Activated naive CD4-positive, alpha-beta T cell treated with anti-CD3 and anti-CD28 coated beads for 36 hours (primary cell): ENCODE measurements at regions of chr19 and their contacts with region 1.

Region 1: GRCh38 chr19:10864538-10864899 is 6.8 kb upstream of the CARM1 start:
- DNase-seq: peak; percentile 94
- H3K4me3 Mint-ChIP-seq: no peak overlapping the region
- H3K27ac Mint-ChIP-seq: no peak overlapping the region
- H3K4me1 Mint-ChIP-seq: peaks cover 15% of the 10 kb centered on the region
- H3K27me3 Mint-ChIP-seq: no peaks in the 10 kb centered on the region

Region 2: DNA sequence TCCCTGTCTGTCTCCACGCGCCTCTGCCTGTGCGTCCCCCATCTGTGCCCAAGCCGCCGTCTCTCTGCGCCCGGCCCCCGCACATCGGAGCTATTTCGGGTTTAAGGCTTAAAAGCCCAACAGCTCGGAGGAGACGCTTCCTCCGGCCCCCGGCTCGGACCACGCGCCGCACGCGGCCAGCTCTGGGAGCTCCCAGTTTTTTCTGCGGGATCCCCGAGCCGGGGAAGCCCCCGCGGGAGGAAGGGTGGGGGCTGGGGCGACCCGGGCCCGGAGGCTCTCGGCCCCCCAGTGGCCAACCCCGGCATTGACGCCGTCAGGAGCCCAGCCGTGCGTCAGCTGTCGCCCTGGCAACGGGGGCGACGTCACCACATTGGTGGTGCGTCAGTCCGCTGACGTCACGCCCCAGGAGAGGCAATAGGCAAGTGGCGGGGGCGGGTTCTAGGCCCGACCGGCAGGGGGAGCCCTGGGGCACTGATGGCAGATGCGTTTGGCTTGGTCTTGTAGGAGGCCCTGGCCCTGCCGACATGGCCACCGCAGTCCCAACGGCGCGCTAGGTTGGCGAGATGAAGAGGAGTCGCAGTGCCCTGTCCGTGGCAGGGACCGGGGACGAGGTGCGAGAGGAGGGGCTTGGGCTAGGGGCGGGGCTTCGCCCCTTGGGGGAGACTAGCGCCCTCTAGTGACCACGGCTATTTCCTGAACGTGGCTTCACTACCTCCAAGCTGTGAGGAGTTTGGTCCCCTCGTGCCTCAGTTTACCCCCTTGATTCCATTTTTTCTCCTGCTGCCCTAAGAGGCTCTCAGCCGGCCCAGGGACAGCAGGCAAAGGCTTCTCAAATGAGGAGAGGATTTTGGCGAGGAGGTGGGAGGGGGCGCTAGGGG is 447.9 kb before region 1 on chr19:
- CTCF ChIA-PET with region 1: no interaction called
- intact Hi-C with region 1: no loop called
- DNase-seq: peak; percentile 94
- H3K4me3 Mint-ChIP-seq: peak overlapping the region; percentile 75
- H3K27ac Mint-ChIP-seq: peak overlapping the region; percentile 82
- H3K4me1 Mint-ChIP-seq: peaks cover 53% of the 10 kb centered on the region
- H3K27me3 Mint-ChIP-seq: peaks cover 40% of the 10 kb centered on the region

Region 3: GRCh38 chr19:10602330-10603083 is 262.0 kb before region 1 on chr19:
- CTCF ChIA-PET with region 1: no interaction called
- intact Hi-C with region 1: no loop called
- DNase-seq: peak; percentile 91
- H3K4me3 Mint-ChIP-seq: peak overlapping the region; percentile 98
- H3K27ac Mint-ChIP-seq: peak overlapping the region; percentile 100
- H3K4me1 Mint-ChIP-seq: peaks cover 24% of the 10 kb centered on the region
- H3K27me3 Mint-ChIP-seq: no peaks in the 10 kb centered on the region

Region 4: GRCh38 chr19:10842788-10843187 is 21.7 kb before region 1 on chr19:
- CTCF ChIA-PET with region 1: interaction called, 20 read pairs
- intact Hi-C with region 1: no loop called
- DNase-seq: no peak
- H3K4me3 Mint-ChIP-seq: no peak overlapping the region
- H3K27ac Mint-ChIP-seq: no peak overlapping the region
- H3K4me1 Mint-ChIP-seq: peaks cover 2% of the 10 kb centered on the region
- H3K27me3 Mint-ChIP-seq: no peaks in the 10 kb centered on the region

Region 5: DNA sequence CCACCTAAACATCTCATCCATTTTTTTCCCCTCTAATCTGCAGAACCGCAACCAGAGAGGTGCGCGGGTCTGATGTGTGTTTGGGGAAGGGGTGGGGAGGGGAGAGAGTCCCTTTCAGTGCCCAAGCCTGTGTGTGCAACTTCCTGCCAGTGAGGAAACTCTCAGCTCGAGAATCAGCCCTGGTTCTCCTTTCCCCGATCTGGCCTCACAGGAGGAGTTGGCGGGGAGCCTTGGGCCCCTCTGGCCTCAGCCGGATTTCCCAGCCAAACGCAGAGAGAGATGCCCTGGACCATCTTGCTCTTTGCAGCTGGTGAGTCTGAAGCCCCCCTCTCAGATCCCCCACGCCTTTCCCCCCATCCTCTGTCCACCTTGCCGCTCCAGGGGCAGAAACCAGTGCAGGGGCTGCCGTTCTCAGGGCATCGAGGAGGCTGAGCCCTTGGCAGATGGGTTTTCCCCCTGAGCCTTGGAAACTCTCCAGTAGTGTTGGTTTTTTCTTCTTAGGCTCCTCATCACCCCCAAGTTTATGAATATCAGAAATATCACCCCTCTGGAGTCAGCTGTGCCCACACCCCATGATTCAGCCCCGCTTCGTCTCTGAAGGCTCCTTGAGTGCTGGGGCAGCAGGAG is 16.2 kb before region 1 on chr19 and contains the start of gene C19orf38:
- CTCF ChIA-PET with region 1: interaction called, 47 read pairs
- intact Hi-C with region 1: no loop called
- DNase-seq: peak; percentile 61
- H3K4me3 Mint-ChIP-seq: peak within 1 kb of the TSS; percentile 71
- H3K27ac Mint-ChIP-seq: peak within 1 kb of the TSS; percentile 64
- H3K4me1 Mint-ChIP-seq: peaks cover 18% of the 10 kb centered on the region
- H3K27me3 Mint-ChIP-seq: no peaks in the 10 kb centered on the region
- total RNA-seq, gene C19orf38: 4.4 to 4.8 TPM

Region 6: GRCh38 chr19:10876459-10877240 is 12.1 kb after region 1 on chr19:
- CTCF ChIA-PET with region 1: interaction called, 33 read pairs
- intact Hi-C with region 1: no loop called
- DNase-seq: no peak
- H3K4me3 Mint-ChIP-seq: no peak overlapping the region
- H3K27ac Mint-ChIP-seq: no peak overlapping the region
- H3K4me1 Mint-ChIP-seq: peaks cover 51% of the 10 kb centered on the region
- H3K27me3 Mint-ChIP-seq: no peaks in the 10 kb centered on the region

Region 7: DNA sequence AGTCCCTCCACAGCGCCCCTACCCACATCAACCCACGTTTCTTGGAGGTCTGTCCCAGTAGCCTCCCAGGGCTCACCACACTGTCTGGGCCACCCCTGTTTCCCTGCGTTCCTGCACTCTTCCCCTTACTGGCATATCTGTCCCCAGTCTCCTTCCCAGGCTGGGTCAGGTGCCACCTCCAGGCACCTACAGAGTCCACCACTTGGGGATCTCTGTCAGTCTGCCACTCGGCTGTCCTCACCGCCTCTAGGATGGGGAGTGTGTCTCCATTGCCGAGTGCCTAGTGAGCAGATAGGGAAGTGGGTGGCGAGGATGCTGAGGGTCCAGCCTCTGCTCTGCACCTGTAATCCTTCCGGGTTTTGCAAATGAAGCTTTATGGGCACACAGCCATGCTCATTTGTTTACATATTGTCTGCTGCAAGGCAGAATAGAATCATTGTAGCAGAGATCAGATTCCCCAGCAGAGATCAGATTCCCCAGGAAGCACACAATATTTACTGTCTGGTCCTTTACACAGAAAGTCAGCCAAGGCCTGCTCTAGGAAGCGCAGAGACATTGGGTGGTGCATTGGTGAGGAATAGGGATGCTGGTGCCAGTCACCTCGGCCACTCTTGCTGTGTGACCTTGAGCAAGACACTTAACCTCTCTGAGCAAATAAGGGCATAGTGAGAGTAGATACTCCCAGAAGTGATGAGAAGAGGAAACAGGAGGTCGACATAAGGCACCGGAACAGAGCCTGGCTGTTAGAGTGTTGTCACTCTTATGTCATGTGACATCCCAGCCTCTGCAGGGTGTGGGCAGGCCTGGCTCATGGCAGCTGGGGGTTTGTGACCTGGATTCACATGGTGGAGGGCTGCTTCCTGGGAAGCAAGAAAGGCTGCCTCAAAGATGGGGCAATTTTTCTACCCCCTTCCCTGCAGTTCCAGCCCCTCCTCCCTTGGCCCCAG is 32.3 kb after region 1 on chr19:
- CTCF ChIA-PET with region 1: no interaction called
- intact Hi-C with region 1: no loop called
- DNase-seq: no peak
- H3K4me3 Mint-ChIP-seq: no peak overlapping the region
- H3K27ac Mint-ChIP-seq: no peak overlapping the region
- H3K4me1 Mint-ChIP-seq: peaks cover 12% of the 10 kb centered on the region
- H3K27me3 Mint-ChIP-seq: no peaks in the 10 kb centered on the region